HepG2 (cell line): ENCODE measurements at regions of chr20 and their contacts with region 1.

Region 1: GRCh38 chr20:25399037-25399430 is 8.4 kb upstream of the ABHD12 start:
- DNase-seq: peak; percentile 91
- ATAC-seq: peak; percentile 93
- H3K4me3 ChIP-seq: peak overlapping the region in 1 of 3 experiments; percentile 6; a peak in 1 of 6 replicates
- H3K27ac ChIP-seq: no peak overlapping the region
- H3K4me1 ChIP-seq: peaks cover 51% of the 10 kb centered on the region
- H3K27me3 ChIP-seq: no peaks in the 10 kb centered on the region
- CTCF ChIP-seq: peak; percentile 91
- EP300 ChIP-seq: peak in 1 of 2 experiments; percentile 18; a peak in 1 of 4 replicates
- POLR2A ChIP-seq: no peak
- RAD21 ChIP-seq: peak; percentile 95

Region 2: DNA sequence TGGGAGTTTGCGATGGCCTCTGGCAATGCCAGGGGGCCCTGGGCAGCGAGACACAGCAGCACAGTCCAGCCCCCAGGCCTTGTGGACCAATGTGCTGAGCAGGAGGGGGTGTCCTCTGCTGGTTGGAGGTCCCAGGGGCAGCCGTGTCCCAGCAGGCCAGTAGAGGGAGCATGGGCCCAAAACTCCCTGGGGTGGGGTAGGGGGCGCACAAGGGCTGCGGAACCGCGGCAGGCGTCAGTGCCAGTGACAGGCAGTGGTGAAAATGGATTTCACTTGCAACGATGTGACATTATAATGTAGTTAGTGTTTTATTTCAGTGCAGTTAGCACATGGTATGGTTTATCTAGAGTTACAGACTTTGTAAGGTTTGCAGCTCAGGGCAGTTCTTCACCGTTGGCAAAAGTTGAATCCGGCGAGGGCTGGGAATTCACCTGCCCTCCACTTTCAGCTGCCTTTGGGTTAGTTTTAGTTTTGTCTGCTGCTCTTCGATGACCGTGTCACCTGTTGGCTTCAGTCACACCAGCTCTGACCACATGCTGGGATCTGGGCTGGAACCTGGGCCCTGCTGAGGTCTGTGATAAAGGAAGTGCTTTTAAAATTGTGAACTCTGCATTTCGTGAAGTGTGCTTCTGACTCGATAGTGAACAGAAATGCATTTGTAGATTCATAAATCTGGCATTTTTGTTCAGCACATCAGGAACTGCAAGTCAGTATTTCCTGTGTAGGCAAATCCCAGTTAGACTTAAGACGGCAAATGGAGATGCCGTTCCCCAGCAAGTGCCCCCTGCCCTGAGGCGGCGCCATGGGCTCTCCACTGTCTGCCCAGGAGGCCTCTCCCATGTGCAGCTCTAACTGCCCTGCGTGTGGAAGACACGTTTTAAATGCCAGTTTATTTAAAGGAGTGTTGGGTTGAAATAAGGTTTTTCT is 104.3 kb before region 1 on chr20:
- CTCF ChIA-PET with region 1: interaction called, 157 read pairs
- POLR2A ChIA-PET with region 1: interaction called, 11 read pairs
- in situ Hi-C with region 1: loop called (anchors 5 kb)
- intact Hi-C with region 1: loop called (anchors 10 kb)
- DNase-seq: peak; percentile 82
- ATAC-seq: peak; percentile 90
- H3K4me3 ChIP-seq: no peak overlapping the region
- H3K27ac ChIP-seq: no peak overlapping the region
- H3K4me1 ChIP-seq: 0 out of 2 replicates have a peak, but pooled peaks cover 5% of the 10 kb centered on the region
- H3K27me3 ChIP-seq: no peaks in the 10 kb centered on the region
- CTCF ChIP-seq: peak; percentile 100
- EP300 ChIP-seq: no peak
- POLR2A ChIP-seq: no peak; a peak in 1 of 4 replicates
- RAD21 ChIP-seq: peak; percentile 98

Region 3: DNA sequence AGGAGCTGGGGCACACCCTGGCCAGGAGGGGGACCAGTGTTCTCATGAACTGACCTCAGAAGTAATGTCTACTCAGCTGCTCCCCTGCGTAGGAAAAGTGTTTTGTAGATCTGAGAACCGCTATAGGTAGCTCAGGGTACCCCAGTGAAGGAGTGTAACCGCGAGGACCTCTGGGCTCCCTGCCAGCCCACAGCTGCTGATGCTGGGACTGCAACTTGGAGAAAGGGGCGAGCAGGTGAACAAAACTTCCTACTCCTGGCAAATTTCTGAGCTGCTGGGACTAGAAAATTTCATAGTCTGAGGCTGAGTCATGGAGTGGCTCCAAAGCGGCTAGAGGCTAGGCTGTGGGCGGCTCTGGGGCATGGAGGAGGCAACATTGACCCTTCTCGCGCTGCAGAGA is 99.2 kb before region 1 on chr20:
- CTCF ChIA-PET with region 1: interaction called, 157 read pairs
- POLR2A ChIA-PET with region 1: interaction called, 11 read pairs
- in situ Hi-C with region 1: loop called (anchors 5 kb)
- intact Hi-C with region 1: loop called (anchors 10 kb)
- DNase-seq: no peak
- ATAC-seq: no peak; the same call in 2 of the 3 replicates
- H3K4me3 ChIP-seq: no peak overlapping the region
- H3K27ac ChIP-seq: no peak overlapping the region
- H3K4me1 ChIP-seq: 0 out of 2 replicates have a peak, but pooled peaks cover under 1% of the 10 kb centered on the region
- H3K27me3 ChIP-seq: no peaks in the 10 kb centered on the region
- CTCF ChIP-seq: no peak
- EP300 ChIP-seq: no peak
- POLR2A ChIP-seq: no peak; a peak in 1 of 4 replicates
- RAD21 ChIP-seq: no peak

Region 4: GRCh38 chr20:25315418-25316210 is 83.4 kb before region 1 on chr20:
- CTCF ChIA-PET with region 1: interaction called, 12 read pairs
- POLR2A ChIA-PET with region 1: no interaction called
- in situ Hi-C with region 1: no loop called
- intact Hi-C with region 1: loop called (anchors 1 kb)
- DNase-seq: no peak
- ATAC-seq: no peak
- H3K4me3 ChIP-seq: no peak overlapping the region
- H3K27ac ChIP-seq: no peak overlapping the region
- H3K4me1 ChIP-seq: peaks cover 12% of the 10 kb centered on the region
- H3K27me3 ChIP-seq: no peaks in the 10 kb centered on the region
- CTCF ChIP-seq: no peak
- EP300 ChIP-seq: no peak
- POLR2A ChIP-seq: no peak
- RAD21 ChIP-seq: no peak

Region 5: DNA sequence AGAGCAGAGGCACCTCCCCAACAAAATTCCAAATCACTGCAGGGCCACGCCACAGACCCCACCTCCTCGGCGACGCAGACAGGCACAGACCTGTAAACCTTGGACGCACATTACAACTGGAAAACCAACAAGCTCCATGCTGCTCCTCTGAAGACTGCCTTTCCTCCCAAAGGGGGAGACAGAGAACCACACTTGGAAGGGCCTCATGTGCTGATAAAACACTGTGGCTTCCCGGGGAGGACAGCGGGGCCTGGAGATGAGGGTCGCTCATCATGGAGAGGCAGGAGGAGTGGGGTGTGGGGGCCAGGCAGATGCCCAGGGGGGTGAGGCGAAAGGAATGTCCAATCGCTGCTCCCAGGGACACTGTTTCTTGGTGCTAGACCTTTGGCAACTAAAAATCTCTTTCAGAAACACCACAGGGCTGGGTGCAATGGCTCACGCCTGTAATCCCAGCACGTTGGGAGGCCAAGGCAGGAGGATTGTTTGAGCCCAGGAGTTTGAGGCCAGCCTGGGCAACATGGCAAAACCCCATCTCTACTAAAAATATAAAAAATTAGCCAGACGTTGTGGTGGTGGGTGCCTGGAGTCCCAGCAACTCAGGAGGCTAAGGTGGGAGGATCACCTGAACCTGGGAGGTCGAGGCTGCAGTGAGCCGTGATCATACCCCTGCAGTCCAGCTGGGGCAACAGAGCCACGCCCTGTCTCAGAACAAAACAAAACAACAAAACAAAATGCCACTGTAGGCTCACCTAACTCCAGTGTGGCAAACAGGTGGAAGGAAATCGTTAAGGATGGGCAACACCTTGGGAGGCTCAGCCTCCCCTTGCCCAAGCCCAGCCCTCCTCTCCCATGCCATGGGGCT is 62.2 kb before region 1 on chr20:
- CTCF ChIA-PET with region 1: interaction called, 45 read pairs
- POLR2A ChIA-PET with region 1: interaction called, 38 read pairs
- in situ Hi-C with region 1: no loop called
- intact Hi-C with region 1: loop called (anchors 1 kb)
- DNase-seq: peak; percentile 82
- ATAC-seq: peak; percentile 81
- H3K4me3 ChIP-seq: no peak overlapping the region
- H3K27ac ChIP-seq: no peak overlapping the region
- H3K4me1 ChIP-seq: peaks cover 45% of the 10 kb centered on the region
- H3K27me3 ChIP-seq: no peaks in the 10 kb centered on the region
- CTCF ChIP-seq: peak; percentile 96
- EP300 ChIP-seq: no peak
- POLR2A ChIP-seq: no peak
- RAD21 ChIP-seq: peak; percentile 91

Region 6: DNA sequence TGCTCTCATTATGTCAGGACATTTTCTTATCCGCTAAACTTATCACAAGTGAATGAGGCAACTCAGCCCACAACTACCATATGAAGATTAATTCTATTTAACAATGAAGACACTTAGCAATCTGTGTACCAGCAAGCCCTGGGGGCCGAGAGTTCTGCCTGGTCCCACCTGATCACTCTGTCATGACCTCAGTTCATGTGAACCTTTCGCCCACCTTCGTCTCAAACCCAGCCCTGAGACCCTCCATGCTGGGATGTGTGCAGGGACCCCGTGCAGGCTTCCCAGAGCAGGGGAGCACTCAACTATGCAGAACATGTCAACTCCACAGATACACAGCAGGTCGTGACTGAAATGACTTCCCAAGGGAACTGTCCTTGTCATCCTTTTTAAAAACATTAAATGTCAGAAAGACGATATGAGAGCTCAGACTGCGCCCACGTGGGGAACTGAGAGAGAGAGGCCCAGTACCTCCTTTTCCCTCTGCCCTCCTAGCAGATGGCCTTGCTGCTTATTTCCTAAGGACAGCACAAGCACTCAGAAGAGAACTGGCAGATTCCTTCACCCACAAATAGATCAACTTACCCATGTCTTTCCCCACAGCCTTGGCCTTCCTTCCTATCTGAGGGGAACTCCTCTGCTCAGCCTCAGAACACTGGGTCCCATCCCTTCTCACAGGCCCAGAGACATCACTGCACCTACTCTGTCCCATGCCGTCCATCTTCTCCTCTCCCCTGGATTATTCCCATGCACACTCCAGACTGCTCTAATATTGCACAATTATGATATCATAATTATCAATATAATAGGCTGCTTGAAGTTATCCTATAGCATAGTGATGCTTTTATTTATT is 19.9 kb before region 1 on chr20:
- CTCF ChIA-PET with region 1: interaction called, 5 read pairs
- POLR2A ChIA-PET with region 1: interaction called, 15 read pairs
- in situ Hi-C with region 1: no loop called
- intact Hi-C with region 1: no loop called
- DNase-seq: no peak
- ATAC-seq: peak; percentile 24
- H3K4me3 ChIP-seq: peak overlapping the region in 1 of 3 experiments; percentile 15; a peak in 1 of 6 replicates
- H3K27ac ChIP-seq: peak overlapping the region; percentile 10
- H3K4me1 ChIP-seq: peaks cover 66% of the 10 kb centered on the region
- H3K27me3 ChIP-seq: no peaks in the 10 kb centered on the region; a peak in 1 of 5 replicates
- CTCF ChIP-seq: no peak
- EP300 ChIP-seq: no peak
- POLR2A ChIP-seq: no peak
- RAD21 ChIP-seq: no peak

Region 7: DNA sequence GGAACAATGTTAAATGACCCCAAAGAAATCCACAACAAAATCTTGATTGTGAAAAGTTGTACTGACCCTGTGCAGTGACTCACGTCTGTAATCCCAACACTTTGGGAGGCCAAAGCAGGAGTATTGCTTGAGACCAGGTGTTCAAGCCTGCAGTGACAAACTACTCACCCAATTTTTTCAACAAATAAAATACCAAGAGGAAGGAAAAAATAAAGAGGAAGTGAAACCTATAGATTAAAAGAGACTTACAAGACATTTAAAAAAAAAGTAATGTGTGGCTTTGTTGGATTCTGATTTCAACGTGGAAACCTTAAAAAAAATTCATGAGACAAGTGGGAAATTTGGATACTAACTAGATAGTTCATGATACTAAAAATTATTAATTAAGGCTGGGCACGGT is 40.3 kb after region 1 on chr20:
- CTCF ChIA-PET with region 1: no interaction called
- POLR2A ChIA-PET with region 1: no interaction called
- in situ Hi-C with region 1: no loop called
- intact Hi-C with region 1: no loop called
- DNase-seq: no peak
- ATAC-seq: no peak
- H3K4me3 ChIP-seq: no peak overlapping the region
- H3K27ac ChIP-seq: no peak overlapping the region
- H3K4me1 ChIP-seq: no peaks in the 10 kb centered on the region
- H3K27me3 ChIP-seq: no peaks in the 10 kb centered on the region
- CTCF ChIP-seq: no peak
- EP300 ChIP-seq: no peak
- POLR2A ChIP-seq: no peak
- RAD21 ChIP-seq: no peak